AG04449 (cell line): ENCODE measurements at regions of chr10 and their contacts with region 1.

Region 1: GRCh38 chr10:116385994-116386809 is 41.4 kb upstream of the PNLIPRP3 start:
- DNase-seq: peak; percentile 3
- H3K4me3 ChIP-seq: no peak overlapping the region
- CTCF ChIP-seq: peak; percentile 28

Region 2: DNA sequence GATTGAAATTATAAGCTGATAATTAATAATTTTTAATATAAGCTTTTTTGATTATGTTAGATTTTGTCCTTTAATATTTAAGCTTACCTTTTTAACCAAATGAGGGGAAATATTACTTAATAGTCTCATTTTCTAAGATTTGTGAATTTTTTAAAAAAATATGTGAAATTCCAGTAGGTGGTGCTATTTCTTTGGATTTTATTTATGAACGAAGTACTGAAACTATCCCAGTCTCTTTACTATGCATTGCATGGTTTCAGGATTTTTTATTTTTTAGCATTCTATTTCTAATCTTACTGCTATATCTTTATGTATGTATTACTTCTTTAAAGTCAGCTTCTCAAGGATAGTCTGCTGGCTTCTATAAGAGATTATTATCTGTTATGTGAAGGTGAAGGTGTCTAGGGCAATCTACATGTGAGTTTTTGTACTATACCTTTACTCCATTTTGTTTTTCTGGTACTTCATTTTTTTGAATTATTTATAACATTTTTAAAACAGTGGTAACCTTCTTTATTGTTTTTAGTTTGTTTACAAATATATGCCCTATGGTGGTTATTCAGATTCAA is 1214.7 kb before region 1 on chr10:
- CTCF ChIA-PET with region 1: interaction called, 17 read pairs
- POLR2A ChIA-PET with region 1: no interaction called
- DNase-seq: no peak
- H3K4me3 ChIP-seq: no peak overlapping the region
- CTCF ChIP-seq: no peak

Region 3: GRCh38 chr10:115432188-115432775 is 953.9 kb before region 1 on chr10:
- CTCF ChIA-PET with region 1: interaction called, 32 read pairs
- POLR2A ChIA-PET with region 1: no interaction called
- DNase-seq: no peak
- H3K4me3 ChIP-seq: no peak overlapping the region
- CTCF ChIP-seq: no peak

Region 4: DNA sequence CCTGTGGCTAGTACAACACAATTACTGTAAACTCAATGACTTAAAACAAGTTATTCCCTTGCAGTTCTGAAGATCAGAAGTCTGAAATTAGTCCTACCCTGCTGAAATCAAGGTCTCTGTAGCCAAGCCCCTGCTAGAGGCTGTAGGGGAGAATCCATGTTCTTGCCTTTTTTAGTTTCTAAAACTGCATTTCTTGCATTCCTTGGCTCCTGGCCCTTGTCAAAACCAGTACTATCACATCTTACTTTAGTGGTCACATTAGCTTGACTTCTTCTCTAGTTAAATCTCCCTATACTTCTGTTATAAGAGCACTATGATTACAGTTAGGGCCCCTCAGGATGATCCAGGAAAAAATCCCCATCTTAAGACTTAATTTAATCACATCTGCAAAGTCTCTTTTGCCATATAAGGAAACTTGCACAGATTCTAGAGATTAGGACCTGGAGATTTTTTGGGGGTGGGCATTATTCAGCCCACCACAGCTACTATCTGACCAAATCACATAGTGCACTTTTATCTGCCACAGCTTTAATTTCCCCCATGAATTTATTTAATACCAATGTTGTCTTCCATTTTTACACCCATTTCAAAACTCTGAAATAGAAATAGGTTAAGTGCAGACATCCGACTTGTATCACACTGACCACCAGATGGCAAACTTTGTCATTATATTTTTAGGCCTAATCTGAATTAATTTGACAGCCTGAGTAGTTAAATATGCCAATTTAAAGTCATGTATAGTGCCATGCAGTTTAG is 680.0 kb before region 1 on chr10:
- CTCF ChIA-PET with region 1: interaction called, 14 read pairs
- POLR2A ChIA-PET with region 1: no interaction called
- DNase-seq: no peak
- H3K4me3 ChIP-seq: no peak overlapping the region
- CTCF ChIP-seq: peak; percentile 35